AG04449 (cell line): ENCODE measurements at regions of chr12 and their contacts with region 1.

Region 1: GRCh38 chr12:51521554-51522276 is 69.3 kb upstream of the SCN8A start:
- DNase-seq: no peak
- H3K4me3 ChIP-seq: no peak overlapping the region
- CTCF ChIP-seq: peak; percentile 22

Region 2: DNA sequence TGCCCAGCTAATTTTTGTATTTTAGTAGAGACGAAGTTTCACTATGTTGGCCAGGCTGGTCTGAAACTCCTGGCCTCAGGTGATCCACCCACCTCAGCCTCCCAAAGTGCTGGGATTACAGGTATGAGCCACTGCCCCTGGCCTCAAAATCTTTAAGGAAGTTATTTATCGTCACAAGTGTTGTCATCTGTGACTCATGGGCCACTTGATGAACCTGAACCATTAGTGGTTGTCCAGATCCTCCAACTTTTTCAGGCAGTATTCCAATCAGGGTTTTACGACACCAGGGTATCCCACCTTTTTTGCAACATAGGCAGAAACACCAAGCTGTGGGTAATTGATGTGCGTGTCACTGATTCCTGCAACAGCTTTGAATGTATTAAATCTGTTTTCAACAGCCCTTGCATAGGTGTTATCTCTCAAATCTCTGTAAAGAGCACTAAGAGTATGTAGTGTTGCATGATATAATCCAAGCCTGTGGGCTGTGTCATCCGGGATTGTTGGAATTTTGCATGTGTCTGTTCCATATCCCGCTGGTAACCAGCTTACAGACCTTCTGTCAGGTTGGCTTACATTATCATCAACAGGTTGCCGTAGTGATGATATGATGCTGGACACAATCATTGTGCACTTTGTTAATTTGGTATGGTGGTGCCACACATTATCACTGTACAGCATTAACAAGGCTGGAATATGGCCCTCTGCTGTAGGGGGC is 10.0 kb before region 1 on chr12:
- CTCF ChIA-PET with region 1: interaction called, 12 read pairs
- POLR2A ChIA-PET with region 1: no interaction called
- DNase-seq: no peak
- H3K4me3 ChIP-seq: no peak overlapping the region
- CTCF ChIP-seq: no peak

Region 3: GRCh38 chr12:51531978-51532497 is 10.3 kb after region 1 on chr12:
- CTCF ChIA-PET with region 1: interaction called, 127 read pairs
- POLR2A ChIA-PET with region 1: no interaction called
- DNase-seq: peak; percentile 21
- H3K4me3 ChIP-seq: no peak overlapping the region
- CTCF ChIP-seq: peak; percentile 92